ENCODE measurements at regions of chr15 and their contacts with region 1.

Region 1: DNA sequence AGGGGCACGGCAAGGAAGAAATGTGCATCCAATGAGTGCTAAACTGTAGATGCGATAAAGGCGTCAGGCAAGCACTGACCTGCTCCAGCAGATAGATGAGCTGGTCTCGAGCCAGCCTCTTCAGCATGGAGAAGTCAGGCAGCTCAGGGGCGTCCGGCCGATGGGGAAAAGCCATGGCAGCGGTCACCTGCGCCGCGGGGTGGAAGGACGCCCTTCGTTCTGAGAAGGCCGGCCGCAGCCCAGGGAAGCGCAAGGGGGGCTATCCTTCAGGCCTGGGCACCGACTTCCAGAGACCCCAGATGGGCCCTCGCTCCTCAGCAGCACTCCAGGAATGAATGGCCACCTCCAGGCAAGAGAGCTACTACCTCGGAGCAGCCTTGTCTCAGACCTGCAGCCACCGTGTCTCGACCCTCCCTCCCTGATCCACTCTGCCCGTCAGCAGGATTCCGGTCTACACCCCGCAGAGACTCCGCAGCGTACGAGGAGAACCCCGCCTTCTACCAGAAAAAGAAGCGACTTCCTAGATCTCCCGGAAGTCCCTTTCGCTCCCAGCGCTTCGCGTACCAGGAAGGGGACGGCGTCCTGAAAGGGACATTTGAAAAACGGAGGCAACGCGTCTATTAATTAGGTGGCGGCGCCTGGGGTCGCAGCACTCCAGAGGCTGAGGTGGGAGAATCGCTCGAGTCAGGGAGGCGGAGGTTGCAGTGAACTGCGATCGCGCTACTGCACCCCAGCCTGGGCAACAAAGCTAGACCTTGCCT is at the start of gene VPS33B:
- DNase-seq: peak; percentile 72
- H3K4me3 Mint-ChIP-seq: peak within 1 kb of the TSS; percentile 97
- H3K27ac Mint-ChIP-seq: peak within 1 kb of the TSS; percentile 87
- H3K4me1 Mint-ChIP-seq: peaks cover 25% of the 10 kb centered on the region
- H3K27me3 Mint-ChIP-seq: no peaks in the 10 kb centered on the region
- total RNA-seq, gene VPS33B: 19.2 and 22.4 TPM in 2 replicates

Region 2: DNA sequence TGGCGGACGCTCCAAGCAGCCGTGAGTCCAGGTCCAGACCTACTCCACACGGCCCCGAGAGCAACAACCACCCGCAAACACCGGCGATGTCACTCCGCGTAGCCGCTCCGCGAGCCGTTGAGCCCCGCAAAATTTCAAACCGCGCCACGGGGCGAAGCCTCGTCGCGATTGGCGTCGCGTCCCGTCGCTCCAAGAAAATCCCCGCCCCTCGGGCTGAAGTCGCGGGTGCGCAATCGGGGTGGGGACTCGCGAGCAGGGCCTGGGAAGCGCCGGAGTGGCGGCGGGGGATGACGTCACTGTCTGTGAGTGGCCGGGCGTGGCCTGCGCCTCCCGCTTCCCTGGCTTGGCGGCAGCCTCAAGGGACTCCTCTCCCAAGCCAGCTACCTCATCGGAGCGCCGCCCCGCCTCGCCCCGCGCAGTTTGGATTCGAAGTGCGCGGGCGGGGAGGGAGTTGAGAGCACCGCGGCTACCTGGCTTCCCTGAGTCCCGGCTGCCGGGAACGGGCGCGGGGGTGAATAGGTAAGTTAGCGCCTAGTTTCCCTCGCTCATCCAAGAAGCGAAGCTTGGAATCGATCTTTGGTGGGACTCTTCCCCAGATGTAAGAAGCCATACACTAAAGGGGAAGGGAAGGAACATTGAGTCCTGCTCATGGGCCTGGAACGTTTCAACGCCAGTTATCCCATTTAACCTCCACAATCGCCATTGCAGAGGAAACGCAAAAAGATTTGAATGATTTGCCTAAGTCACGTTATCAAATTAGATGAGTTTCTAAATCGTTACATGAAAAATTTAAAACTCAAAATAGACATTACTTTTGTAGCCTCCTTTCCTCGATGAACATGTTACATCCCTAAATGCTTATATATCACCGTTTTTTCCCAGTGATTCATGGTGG is 27.6 kb before region 1 on chr15 and contains the start of gene PRC1:
- intact Hi-C with region 1: loop called (anchors 2 kb)
- DNase-seq: peak; percentile 98
- H3K4me3 Mint-ChIP-seq: peak within 1 kb of the TSS; percentile 100
- H3K27ac Mint-ChIP-seq: peak within 1 kb of the TSS; percentile 100
- H3K4me1 Mint-ChIP-seq: peaks cover 25% of the 10 kb centered on the region
- H3K27me3 Mint-ChIP-seq: no peaks in the 10 kb centered on the region
- total RNA-seq, gene PRC1: 91.8 and 95.2 TPM in 2 replicates

Region 3: DNA sequence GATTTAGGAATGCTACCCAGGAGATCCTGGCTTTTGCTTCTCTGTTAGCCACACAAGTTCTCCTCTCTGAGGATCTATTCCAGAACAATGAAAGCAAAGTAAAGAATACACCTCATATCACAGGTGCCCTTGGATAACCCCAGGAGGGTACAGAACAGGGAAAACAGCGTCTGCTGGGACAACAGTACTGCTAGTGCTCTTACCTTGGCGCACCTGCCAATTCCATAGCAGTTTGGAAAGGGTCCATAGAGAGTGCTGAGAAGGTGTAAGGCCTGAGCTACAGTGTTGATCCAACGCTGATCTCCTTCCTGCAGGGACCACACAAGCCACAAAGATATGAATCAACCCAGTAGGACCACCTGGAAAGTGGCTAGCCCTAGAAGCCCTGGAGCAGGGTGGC is 15.0 kb before region 1 on chr15:
- intact Hi-C with region 1: no loop called
- DNase-seq: no peak
- H3K4me3 Mint-ChIP-seq: no peak overlapping the region
- H3K27ac Mint-ChIP-seq: no peak overlapping the region
- H3K4me1 Mint-ChIP-seq: no peaks in the 10 kb centered on the region
- H3K27me3 Mint-ChIP-seq: no peaks in the 10 kb centered on the region